Activated CD4-positive, alpha-beta T cell treated with anti-CD3 and anti-CD28 coated beads, Interleukin-2, amount 10 ng/mL, durations not matched to agents 7 days and 5 days (primary cell): ENCODE measurements at regions of chr2 and their contacts with region 1.

Region 1: DNA sequence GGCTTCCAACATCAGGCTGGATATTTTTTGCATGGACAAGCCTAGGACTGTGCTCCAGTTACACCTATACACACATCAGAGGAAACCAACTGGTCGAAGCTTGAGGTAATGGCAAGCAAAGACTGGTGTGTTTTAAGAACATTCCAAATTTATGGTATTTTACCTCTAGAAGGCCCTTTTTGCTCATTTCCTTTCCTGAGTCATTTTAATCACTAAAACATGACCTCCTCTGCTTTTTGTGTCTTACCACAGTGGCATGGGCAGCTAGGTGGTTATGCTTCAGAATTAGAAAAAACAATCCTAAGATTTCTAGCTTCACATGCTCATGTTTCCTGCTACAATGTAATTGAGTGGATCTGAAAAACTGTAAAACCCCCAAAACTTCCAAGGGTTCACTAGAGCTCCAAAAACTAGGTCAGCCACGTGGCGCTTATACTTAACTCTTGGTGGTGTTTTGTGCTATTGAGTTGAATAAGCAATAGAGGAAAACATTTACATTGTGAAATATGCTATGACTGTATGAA is 30.6 kb upstream of the CHRNA1 start:
- DNase-seq: no peak
- H3K4me3 Mint-ChIP-seq: no peak overlapping the region
- H3K27ac Mint-ChIP-seq: no peak overlapping the region
- H3K4me1 Mint-ChIP-seq: peaks cover 6% of the 10 kb centered on the region
- H3K27me3 Mint-ChIP-seq: no peaks in the 10 kb centered on the region

Region 2: DNA sequence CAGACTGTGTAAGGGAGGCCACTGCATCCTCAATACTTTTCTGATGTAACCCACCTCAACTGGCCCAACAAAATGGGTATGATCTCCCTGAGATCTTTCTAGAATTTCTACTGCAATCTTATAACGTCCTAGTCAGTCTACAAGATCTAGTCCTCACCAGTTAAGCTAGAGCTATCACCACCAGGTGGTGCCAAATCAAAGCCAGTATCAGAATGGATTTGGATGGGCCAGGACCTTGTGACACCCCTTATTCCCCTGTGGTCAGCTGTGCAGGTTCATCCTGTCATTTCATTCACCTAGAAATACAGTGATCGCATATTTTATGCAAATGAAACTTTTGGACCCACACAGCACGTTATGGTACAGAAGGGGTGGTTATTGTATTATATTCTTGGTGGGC is 636.9 kb before region 1 on chr2:
- CTCF ChIA-PET with region 1: no interaction called
- POLR2A ChIA-PET with region 1: no interaction called
- DNase-seq: peak; percentile 52
- H3K4me3 Mint-ChIP-seq: no peak overlapping the region
- H3K27ac Mint-ChIP-seq: no peak overlapping the region
- H3K4me1 Mint-ChIP-seq: no peaks in the 10 kb centered on the region
- H3K27me3 Mint-ChIP-seq: no peaks in the 10 kb centered on the region

Region 3: DNA sequence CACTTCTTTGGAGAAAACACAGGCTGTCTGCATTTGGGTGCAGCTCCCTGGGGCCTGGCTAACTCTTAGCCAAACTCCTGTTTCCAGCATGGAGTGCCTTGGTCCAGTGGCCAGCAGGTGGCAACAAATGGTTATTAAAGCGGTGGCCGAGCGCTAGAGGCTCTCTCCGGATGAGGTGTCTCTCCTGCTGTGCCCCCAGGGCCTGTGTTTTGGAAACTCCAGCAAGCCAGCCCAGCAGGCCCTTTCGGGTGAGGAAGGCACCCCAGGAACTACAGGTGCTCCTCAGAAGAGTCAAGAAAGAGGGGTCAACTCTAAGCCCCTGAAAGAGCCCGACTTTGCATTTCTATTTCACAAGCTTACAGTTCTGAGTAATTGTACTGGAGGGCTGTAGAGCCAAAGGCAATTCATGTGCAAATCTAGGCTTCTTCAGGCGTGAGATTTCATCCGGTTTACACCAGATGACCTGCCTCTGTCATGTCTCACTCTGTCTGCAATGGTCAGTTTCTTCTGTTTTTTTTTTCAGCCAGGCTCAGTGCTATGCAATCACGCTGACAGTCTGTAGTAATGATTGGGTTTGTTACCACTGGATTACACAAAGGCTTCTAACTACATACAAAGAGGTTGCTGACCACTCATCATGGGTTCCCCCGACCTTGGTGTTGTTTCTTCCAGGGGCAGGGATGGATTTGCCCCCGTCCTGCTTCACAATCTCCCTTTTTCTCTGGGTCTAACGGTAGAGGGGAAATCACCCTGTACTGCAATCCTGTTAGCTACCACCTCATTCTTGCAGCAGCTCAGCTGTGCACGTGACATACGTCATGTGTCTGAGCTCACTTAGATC is 23.1 kb before region 1 on chr2:
- CTCF ChIA-PET with region 1: interaction called, 12 read pairs
- POLR2A ChIA-PET with region 1: no interaction called
- DNase-seq: peak; percentile 51
- H3K4me3 Mint-ChIP-seq: no peak overlapping the region
- H3K27ac Mint-ChIP-seq: no peak overlapping the region
- H3K4me1 Mint-ChIP-seq: peaks cover 18% of the 10 kb centered on the region
- H3K27me3 Mint-ChIP-seq: peaks cover 6% of the 10 kb centered on the region